Activated CD4-positive, alpha-beta T cell treated with anti-CD3 and anti-CD28 coated beads, Interleukin-2, amount 10 ng/mL, durations not matched to agents 7 days and 5 days (primary cell): ENCODE measurements at regions of chr12 and their contacts with region 1.

Region 1: GRCh38 chr12:120649442-120650232 is 9.2 kb downstream of the CABP1 start:
- DNase-seq: no peak
- H3K4me3 Mint-ChIP-seq: peak overlapping the region; percentile 28
- H3K27ac Mint-ChIP-seq: no peak overlapping the region
- H3K4me1 Mint-ChIP-seq: peaks cover 18% of the 10 kb centered on the region
- H3K27me3 Mint-ChIP-seq: peaks cover 60% of the 10 kb centered on the region

Region 2: DNA sequence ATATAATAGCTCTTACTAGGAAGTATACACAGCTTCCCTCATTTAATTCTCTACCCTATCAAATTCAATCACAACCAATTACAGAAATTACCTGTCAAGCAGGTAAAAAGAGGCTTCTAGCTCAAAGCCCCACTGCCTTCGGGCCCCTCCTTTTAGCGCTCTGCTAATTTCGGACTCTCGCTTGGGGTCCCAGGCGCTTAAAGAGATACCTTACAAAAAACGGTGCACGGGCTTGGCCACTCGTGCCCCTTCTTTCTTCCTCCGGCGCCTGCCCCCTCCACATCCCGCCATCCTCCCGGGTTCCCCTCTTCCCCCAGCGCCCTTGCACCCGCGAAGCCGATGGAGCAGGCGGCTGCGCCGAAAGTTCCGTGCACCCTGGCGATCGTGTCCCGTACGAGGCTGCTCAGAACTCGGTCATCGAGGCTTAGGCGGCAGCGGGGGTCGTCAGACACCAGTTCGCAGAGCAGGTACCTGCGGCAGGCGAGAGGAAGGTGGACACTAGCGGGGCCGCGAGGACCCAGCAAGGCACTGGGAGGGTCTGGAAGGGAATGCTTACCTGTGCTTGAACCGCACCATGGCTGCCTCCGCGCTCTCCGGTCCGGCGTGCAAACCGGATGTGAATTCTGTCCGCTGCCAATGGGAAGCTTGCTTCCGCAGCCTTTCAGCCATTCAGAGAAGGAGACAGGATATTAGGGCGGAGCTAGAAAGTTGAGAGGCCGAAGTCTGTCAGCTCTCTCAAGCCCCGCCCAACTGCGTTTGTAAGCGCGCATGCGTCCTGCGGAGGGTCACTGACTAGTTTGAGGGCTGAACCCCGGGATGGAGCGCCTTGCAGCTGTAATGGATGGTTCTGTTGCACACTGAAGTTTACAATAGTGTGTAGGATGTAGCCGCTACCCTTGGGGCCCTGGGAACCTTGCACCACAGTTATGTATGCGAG is 68.6 kb before region 1 on chr12 and contains the start of gene POP5:
- CTCF ChIA-PET with region 1: interaction called, 35 read pairs
- POLR2A ChIA-PET with region 1: no interaction called
- DNase-seq: peak; percentile 97
- H3K4me3 Mint-ChIP-seq: peak within 1 kb of the TSS; percentile 98
- H3K27ac Mint-ChIP-seq: peak within 1 kb of the TSS; percentile 93
- H3K4me1 Mint-ChIP-seq: peaks cover 43% of the 10 kb centered on the region
- H3K27me3 Mint-ChIP-seq: peaks cover 21% of the 10 kb centered on the region
- total RNA-seq, gene POP5: 60.8 to 64.7 TPM

Region 3: DNA sequence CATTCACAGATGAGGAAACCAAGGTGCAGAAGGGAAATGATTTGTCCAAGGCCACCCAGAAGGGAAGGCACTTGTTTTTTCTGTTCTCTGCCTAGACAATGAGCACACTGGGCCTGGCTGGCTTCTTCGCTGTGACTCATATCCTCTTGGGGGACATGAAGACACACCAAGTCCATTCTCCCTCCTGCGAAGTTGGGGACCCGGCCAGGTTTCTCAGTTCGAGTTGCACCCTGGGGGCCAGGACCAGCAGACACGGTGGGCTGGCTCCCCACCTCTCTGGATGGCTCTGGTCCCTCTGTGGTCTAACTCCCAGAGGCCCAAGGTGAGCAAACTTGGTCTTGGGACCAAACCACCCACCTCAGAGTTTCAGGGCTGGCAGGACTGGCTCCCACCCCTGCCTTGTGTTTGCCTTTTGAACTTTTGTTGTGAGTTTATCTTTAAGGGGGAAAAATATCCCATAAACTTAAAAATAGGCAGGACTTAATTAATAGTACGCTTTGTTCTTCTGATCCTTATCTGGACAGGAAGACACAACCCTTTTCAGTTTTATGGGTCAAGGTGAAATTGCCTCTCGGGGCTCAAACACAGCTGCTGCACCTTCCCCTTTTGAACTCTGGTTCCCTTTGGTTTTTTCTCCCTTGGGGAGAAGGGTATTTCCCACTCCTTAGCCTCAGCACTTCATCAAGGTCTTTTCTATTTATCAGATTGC is 28.3 kb after region 1 on chr12:
- CTCF ChIA-PET with region 1: interaction called, 10 read pairs
- POLR2A ChIA-PET with region 1: no interaction called
- DNase-seq: peak; percentile 10
- H3K4me3 Mint-ChIP-seq: no peak overlapping the region
- H3K27ac Mint-ChIP-seq: peak overlapping the region; percentile 76
- H3K4me1 Mint-ChIP-seq: peaks cover 20% of the 10 kb centered on the region
- H3K27me3 Mint-ChIP-seq: peaks cover 5% of the 10 kb centered on the region

Region 4: GRCh38 chr12:120698665-120699064 is 49.0 kb after region 1 on chr12:
- CTCF ChIA-PET with region 1: interaction called, 11 read pairs
- POLR2A ChIA-PET with region 1: no interaction called
- DNase-seq: no peak
- H3K4me3 Mint-ChIP-seq: no peak overlapping the region
- H3K27ac Mint-ChIP-seq: no peak overlapping the region
- H3K4me1 Mint-ChIP-seq: peaks cover 2% of the 10 kb centered on the region
- H3K27me3 Mint-ChIP-seq: no peaks in the 10 kb centered on the region